Activated CD8-positive, alpha-beta T cell treated with anti-CD3 and anti-CD28 coated beads for 36 hours (primary cell): ENCODE measurements at regions of chr1 and their contacts with region 1.

Region 1: DNA sequence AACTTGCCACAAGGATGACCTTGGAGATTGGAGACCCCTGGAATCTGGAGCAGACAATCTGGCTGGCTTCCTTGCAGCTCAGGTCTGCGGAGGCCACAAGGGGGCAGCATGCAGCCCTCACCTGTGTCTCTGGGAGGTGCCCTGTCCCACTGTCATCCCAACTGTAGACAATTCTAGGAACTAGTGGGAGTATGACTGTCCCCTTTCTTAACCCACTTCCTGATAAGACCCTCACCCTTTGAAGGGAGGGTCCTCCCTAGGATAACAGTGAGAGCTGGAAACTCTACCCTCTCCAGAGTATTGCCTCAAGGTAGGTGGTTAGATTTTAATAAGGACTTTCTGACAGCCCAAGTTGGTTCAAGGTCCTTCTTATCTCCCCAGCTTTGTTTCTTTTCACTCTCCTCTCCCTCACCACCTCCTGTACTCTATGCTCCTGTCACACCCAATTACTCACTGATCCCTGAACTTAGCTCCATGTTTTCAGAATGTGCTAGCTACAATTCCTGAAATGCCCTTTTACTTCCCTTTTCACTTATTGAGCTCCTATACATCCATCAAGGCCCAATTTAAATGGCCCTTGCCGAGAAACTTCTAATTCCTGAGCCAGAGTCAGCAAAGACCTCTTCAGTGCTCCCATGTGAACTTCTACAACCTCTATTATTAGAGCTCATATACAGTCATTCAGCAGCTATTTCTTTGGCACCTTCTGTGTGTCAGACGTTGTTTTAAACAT is 9.2 kb upstream of the KCNQ4 start:
- DNase-seq: peak; percentile 82
- ATAC-seq: peak; percentile 87
- H3K4me3 Mint-ChIP-seq: no peak overlapping the region
- H3K27ac Mint-ChIP-seq: peak overlapping the region; percentile 39
- H3K4me1 Mint-ChIP-seq: peaks cover 3% of the 10 kb centered on the region
- H3K27me3 Mint-ChIP-seq: no peaks in the 10 kb centered on the region
- CTCF ChIP-seq: peak; percentile 87

Region 2: GRCh38 chr1:40668769-40669525 is 105.5 kb before region 1 on chr1:
- CTCF ChIA-PET with region 1: interaction called, 10 read pairs
- POLR2A ChIA-PET with region 1: no interaction called
- intact Hi-C with region 1: no loop called
- DNase-seq: peak; percentile 91
- ATAC-seq: peak; percentile 77
- H3K4me3 Mint-ChIP-seq: peak overlapping the region; percentile 56
- H3K27ac Mint-ChIP-seq: no peak overlapping the region
- H3K4me1 Mint-ChIP-seq: peaks cover 15% of the 10 kb centered on the region
- H3K27me3 Mint-ChIP-seq: peaks cover 2% of the 10 kb centered on the region
- CTCF ChIP-seq: peak; percentile 98

Region 3: GRCh38 chr1:40722636-40723035 is 51.8 kb before region 1 on chr1:
- CTCF ChIA-PET with region 1: interaction called, 12 read pairs
- POLR2A ChIA-PET with region 1: interaction called, 3 read pairs
- intact Hi-C with region 1: no loop called
- DNase-seq: no peak
- ATAC-seq: no peak
- H3K4me3 Mint-ChIP-seq: no peak overlapping the region
- H3K27ac Mint-ChIP-seq: no peak overlapping the region
- H3K4me1 Mint-ChIP-seq: peaks cover 34% of the 10 kb centered on the region
- H3K27me3 Mint-ChIP-seq: no peaks in the 10 kb centered on the region
- CTCF ChIP-seq: no peak

Region 4: DNA sequence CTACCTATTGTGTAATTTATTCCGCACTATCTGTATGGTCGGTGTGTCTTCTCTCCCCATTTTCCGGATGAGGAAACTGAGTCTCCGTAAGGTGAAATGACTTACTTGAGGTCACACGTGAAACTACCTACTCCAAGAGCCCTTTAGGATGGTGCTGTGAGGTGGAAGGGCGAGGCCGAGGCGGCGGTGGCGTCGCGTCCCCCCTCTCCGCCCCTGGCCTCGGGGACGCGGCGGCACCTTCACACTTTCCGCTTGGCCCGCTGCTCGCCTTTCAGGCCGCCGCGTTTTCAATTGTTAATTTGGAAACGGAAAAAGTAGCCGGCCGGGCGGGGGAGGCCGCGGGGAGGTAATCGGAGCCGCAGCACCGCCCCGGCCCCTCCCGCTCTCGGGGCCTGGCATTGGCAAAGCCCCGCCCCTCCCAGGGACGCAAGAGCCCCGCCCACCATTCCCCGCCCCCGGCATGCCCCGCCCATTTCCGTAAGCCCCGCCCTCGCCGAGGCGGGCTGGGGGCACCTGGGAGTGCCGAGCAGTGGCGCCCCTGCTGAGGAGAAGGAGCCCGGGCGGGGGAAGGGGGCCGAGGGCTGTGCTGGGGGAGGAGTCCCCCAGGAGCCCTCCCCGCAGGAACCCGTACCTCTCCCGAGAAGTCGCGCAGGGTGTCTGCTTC is 27.8 kb after region 1 on chr1:
- CTCF ChIA-PET with region 1: interaction called, 50 read pairs
- POLR2A ChIA-PET with region 1: interaction called, 3 read pairs
- intact Hi-C with region 1: no loop called
- DNase-seq: peak; percentile 91
- ATAC-seq: peak; percentile 96
- H3K4me3 Mint-ChIP-seq: peak overlapping the region; percentile 46
- H3K27ac Mint-ChIP-seq: no peak overlapping the region
- H3K4me1 Mint-ChIP-seq: peaks cover 28% of the 10 kb centered on the region
- H3K27me3 Mint-ChIP-seq: no peaks in the 10 kb centered on the region
- CTCF ChIP-seq: no peak

Region 5: DNA sequence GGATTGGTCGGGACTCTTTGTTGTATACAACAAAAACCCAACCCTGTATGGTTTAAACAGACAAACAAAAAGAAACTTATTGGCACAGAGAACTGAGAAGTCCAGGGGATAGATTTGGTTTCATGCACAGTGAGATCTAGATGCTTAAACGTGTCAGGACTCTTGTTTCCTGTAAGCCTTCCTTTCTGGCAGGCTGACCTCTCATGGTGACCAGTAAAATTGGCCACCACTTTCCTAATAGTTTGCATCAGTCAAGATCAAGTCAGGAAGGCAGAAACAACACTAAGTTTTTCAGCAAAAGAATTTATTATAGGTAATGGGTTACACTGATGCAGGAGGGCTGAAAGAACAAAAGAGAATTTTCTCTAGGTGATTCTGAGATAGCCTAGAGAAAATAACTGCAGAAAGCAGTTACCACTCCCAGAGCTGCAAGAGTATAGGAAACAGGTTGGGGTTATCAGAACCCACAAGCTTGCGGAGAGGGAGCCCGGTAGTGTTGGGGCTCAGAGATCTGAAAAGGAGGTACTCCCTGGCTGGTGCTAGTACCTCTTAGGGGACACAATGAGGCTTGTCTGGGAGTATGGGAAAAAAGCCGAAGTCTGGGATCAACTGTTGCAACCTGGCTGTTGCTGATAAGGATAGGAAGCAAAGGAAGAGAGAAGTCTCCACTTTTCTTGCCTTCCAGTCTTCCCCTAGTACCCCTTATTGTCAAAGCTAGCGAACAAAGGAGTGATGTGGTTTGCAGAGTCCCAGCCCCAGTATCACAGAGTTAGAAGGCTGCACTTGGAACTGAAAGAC is 66.3 kb after region 1 on chr1:
- CTCF ChIA-PET with region 1: interaction called, 19 read pairs
- POLR2A ChIA-PET with region 1: interaction called, 4 read pairs
- intact Hi-C with region 1: no loop called
- DNase-seq: no peak
- ATAC-seq: peak; percentile 31
- H3K4me3 Mint-ChIP-seq: no peak overlapping the region
- H3K27ac Mint-ChIP-seq: no peak overlapping the region
- H3K4me1 Mint-ChIP-seq: peaks cover 29% of the 10 kb centered on the region
- H3K27me3 Mint-ChIP-seq: no peaks in the 10 kb centered on the region
- CTCF ChIP-seq: no peak

Region 6: DNA sequence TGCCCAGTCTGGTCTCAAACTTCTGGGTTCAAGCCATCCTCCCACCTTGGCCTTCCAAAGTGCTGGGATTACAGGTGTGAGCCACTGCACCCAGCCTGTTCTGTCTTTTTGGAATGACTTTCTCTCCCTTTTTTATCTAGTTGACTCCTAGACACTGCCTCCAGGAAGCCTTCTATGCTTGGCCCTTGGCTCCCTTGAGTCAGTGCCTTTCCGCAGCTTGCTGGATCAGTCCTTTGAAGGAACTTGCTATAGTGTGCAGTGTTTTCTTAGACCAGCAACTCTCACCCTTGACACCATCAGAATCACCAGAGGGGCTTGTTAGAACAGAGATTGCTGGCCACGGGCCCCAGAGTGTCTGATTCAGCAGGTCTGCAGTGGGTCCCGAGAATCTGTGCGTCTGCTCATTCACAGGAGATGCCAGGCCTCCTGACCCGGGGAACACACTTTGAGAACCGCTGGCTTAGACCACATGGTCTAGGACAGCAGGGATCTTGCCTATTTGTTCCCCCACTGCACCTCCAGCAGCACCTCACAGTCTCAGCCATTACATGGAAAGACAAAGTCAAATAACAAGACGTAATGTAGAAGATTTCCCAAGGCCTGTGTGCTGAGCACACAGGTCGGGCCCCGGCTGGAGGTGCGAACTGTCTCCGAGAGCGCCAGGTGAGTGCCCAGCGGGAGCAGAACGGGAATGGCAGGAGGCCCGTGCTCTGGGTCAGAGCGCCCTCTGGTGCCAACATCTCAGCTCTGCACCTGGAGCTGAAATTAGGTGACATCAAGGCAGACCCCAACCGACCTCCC is 177.7 kb after region 1 on chr1:
- CTCF ChIA-PET with region 1: interaction called, 73 read pairs
- POLR2A ChIA-PET with region 1: no interaction called
- intact Hi-C with region 1: loop called (anchors 5 kb)
- DNase-seq: peak; percentile 68
- ATAC-seq: peak; percentile 67
- H3K4me3 Mint-ChIP-seq: no peak overlapping the region
- H3K27ac Mint-ChIP-seq: no peak overlapping the region
- H3K4me1 Mint-ChIP-seq: peaks cover 7% of the 10 kb centered on the region
- H3K27me3 Mint-ChIP-seq: peaks cover 15% of the 10 kb centered on the region
- CTCF ChIP-seq: peak; percentile 99